Left cardiac atrium (tissue), 4 donors: ENCODE measurements at regions of chr10 and their contacts with region 1.

Region 1: GRCh38 chr10:58919927-58920654 is 256.4 kb upstream of the PHYHIPL start:
- DNase-seq: no peak
- ATAC-seq: peak; percentile 15 to 56

Region 2: GRCh38 chr10:58856508-58857240 is 63.4 kb before region 1 on chr10:
- intact Hi-C with region 1: loop called in 1 of 2 experiments (anchors 5 kb)
- DNase-seq: peak; percentile 43
- ATAC-seq: peak; percentile 91 to 95

Region 3: GRCh38 chr10:58867683-58868082 is 52.4 kb before region 1 on chr10:
- intact Hi-C with region 1: no loop called
- DNase-seq: no peak
- ATAC-seq: no peak

Region 4: GRCh38 chr10:59027975-59028655 is 108.0 kb after region 1 on chr10:
- intact Hi-C with region 1: no loop called
- DNase-seq: no peak
- ATAC-seq: no peak